Posterior vena cava (tissue), 2 donors: ENCODE measurements at regions of chr11 and their contacts with region 1.

Region 1: DNA sequence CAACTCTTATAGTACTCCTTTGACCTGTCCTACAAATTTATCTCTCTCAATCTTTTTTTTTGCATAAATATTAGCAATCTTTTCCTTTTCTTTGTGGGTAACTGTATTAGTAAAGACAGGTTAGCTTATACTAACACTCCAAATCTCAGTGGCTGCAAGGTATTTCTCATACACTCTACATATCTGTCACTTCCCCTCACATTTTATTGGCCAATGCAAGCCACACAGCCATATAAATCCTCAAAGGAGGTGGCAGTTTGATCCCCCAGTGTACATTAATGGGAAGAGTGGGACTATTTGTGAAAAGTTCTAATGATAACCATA is 42.6 kb upstream of the EED start:
- DNase-seq: no peak

Region 2: GRCh38 chr11:85854557-85855340 is 347.2 kb before region 1 on chr11:
- intact Hi-C with region 1: loop called in 1 of 2 experiments (anchors 5 kb)
- DNase-seq: peak; percentile 98

Region 3: GRCh38 chr11:85941380-85941973 is 260.5 kb before region 1 on chr11:
- intact Hi-C with region 1: loop called in 1 of 2 experiments (anchors 5 kb)
- DNase-seq: no peak